Activated B cell treated with CpG ODN at 0.5 μM for 24 hours (primary cell): ENCODE measurements at regions of chr10 and their contacts with region 1.

Region 1: GRCh38 chr10:72273410-72274212 is at the start of gene DDIT4:
- DNase-seq: peak; percentile 95
- ATAC-seq: peak; percentile 93
- H3K4me3 Mint-ChIP-seq: peak within 1 kb of the TSS; percentile 98
- H3K27ac Mint-ChIP-seq: peak within 1 kb of the TSS; percentile 94
- H3K4me1 Mint-ChIP-seq: peaks cover 40% of the 10 kb centered on the region
- H3K27me3 Mint-ChIP-seq: no peaks in the 10 kb centered on the region
- CTCF ChIP-seq: no peak
- total RNA-seq, gene DDIT4: 175 and 180 TPM in 2 replicates

Region 2: DNA sequence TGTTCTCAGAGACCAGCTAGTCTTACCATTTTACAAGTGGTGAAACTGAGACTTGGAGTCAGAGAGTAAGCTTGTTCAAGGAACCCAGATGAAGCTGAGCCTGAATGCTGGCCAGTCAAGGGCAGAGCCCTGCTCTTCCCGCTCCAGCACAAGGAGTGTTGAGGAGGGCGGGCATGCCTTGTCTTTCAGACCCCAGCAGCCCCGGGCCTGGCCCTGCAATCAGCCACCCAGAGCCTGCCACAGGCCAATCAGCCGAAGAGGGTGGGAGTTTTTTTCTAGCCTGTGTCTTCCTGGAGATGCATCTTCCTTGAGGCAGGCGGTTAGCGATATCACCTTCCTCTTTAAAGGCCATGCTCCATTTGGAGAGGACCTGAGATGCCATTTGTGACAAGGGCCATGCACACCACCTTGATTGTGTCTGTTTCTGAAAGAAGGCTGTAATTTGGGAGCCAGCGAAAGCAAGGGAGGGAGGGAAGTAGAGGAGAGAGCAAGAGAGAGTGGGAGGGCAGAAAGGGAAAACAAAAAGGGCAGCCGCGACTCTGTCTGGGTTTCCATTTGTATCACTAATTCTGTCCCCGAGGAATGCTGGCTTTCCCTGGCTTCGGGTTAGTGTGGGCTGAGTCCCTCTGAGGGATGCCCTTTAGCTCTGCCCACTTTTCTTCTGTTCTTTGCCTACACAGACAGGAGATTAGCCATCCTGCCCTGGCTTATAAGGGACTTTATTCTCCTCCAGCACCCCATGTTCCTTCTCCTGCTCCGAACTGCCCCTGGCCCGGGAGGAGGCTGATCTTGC is 868.9 kb before region 1 on chr10:
- CTCF ChIA-PET with region 1: no interaction called
- POLR2A ChIA-PET with region 1: no interaction called
- intact Hi-C with region 1: no loop called
- DNase-seq: no peak
- ATAC-seq: no peak
- H3K4me3 Mint-ChIP-seq: no peak overlapping the region
- H3K27ac Mint-ChIP-seq: no peak overlapping the region
- H3K4me1 Mint-ChIP-seq: no peaks in the 10 kb centered on the region
- H3K27me3 Mint-ChIP-seq: peaks cover 15% of the 10 kb centered on the region
- CTCF ChIP-seq: no peak

Region 3: DNA sequence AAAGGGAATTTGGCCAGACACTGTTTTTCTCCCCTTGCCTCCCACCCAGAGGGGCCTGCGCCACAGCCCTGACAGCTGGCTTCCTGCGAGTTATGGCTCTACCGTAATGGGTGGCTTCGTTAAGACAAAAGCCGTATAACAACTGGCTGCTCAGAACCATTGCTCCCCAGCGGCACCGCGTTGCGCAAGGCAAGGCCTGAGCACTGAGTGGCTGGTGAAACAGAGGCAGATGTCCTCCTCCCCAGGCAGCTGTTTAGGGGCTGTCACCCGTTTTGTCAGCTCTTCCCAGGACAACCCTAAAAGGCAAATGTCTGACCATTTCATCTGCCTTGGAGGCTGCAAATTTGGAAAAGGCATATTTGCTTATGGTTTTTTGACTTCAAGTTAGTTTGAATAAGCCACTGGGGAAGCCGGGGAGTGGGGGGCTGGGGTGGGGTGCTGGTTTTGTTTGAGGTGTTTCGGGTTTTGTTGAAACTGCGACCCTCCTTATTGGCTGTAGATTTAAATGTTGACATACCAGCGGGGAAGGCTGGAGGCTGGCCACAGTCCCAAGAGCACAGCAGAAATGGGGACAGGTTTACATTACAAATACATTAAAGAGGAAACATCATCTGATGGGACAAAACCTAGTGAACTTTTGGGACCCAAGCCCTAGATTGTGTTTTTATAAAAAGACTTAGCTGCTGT is 184.6 kb before region 1 on chr10:
- CTCF ChIA-PET with region 1: no interaction called
- POLR2A ChIA-PET with region 1: interaction called, 8 read pairs
- intact Hi-C with region 1: loop called (anchors 1 kb)
- DNase-seq: peak; percentile 29
- ATAC-seq: peak; percentile 27
- H3K4me3 Mint-ChIP-seq: peak overlapping the region; percentile 99
- H3K27ac Mint-ChIP-seq: peak overlapping the region; percentile 97
- H3K4me1 Mint-ChIP-seq: peaks cover 39% of the 10 kb centered on the region
- H3K27me3 Mint-ChIP-seq: no peaks in the 10 kb centered on the region
- CTCF ChIP-seq: no peak

Region 4: GRCh38 chr10:72248468-72249151 is 25.0 kb before region 1 on chr10:
- CTCF ChIA-PET with region 1: interaction called, 14 read pairs
- POLR2A ChIA-PET with region 1: interaction called, 380 read pairs
- intact Hi-C with region 1: loop called (anchors 1 kb)
- DNase-seq: peak; percentile 54
- ATAC-seq: peak; percentile 78
- H3K4me3 Mint-ChIP-seq: peak overlapping the region; percentile 74
- H3K27ac Mint-ChIP-seq: peak overlapping the region; percentile 97
- H3K4me1 Mint-ChIP-seq: peaks cover 85% of the 10 kb centered on the region
- H3K27me3 Mint-ChIP-seq: no peaks in the 10 kb centered on the region
- CTCF ChIP-seq: no peak

Region 5: DNA sequence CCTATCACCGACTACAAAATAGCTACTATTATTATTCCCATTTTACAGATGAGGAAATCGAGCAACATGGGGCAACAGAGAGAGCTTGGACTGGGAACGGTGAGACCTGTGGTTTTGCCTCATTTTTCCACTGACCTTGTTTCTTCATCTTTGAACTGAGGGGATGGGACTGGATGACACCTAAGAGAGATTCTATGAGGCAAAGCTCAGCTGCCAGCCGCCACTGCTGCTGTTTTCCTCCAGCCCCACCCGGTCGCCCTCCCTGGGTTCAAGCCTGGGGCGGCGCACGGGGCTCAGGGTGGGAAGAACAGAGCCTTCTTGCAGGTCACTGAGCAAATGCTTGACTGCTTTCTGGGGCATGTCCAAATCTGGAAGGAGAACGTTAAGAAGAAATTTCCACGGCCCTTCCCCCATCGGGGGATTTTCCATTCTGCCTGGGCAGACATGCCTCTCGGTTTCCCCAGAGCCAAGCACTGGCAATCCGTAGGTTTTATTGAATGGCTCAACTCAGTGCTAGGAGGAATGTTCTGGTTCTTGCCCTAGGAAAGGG is 12.4 kb after region 1 on chr10:
- CTCF ChIA-PET with region 1: interaction called, 21 read pairs
- POLR2A ChIA-PET with region 1: interaction called, 377 read pairs
- intact Hi-C with region 1: loop called (anchors 1 kb)
- DNase-seq: no peak
- ATAC-seq: peak; percentile 11
- H3K4me3 Mint-ChIP-seq: peak overlapping the region; percentile 33
- H3K27ac Mint-ChIP-seq: peak overlapping the region; percentile 73
- H3K4me1 Mint-ChIP-seq: peaks cover 40% of the 10 kb centered on the region
- H3K27me3 Mint-ChIP-seq: no peaks in the 10 kb centered on the region
- CTCF ChIP-seq: no peak

Region 6: GRCh38 chr10:72308320-72308987 is 34.8 kb after region 1 on chr10:
- CTCF ChIA-PET with region 1: interaction called, 5 read pairs
- POLR2A ChIA-PET with region 1: interaction called, 18 read pairs
- intact Hi-C with region 1: no loop called
- DNase-seq: no peak
- ATAC-seq: peak; percentile 27
- H3K4me3 Mint-ChIP-seq: no peak overlapping the region
- H3K27ac Mint-ChIP-seq: peak overlapping the region; percentile 50
- H3K4me1 Mint-ChIP-seq: peaks cover 60% of the 10 kb centered on the region
- H3K27me3 Mint-ChIP-seq: no peaks in the 10 kb centered on the region
- CTCF ChIP-seq: no peak